HAP-1 (cell line): ENCODE measurements at regions of chr6 and their contacts with region 1.

Region 1: GRCh38 chr6:33248925-33249731 is 22.5 kb downstream of the VPS52 start:
- DNase-seq: peak; percentile 99 to 100
- H3K4me3 ChIP-seq: peak overlapping the region; percentile 37
- H3K4me1 ChIP-seq: peaks cover 16% of the 10 kb centered on the region
- H3K27me3 ChIP-seq: no peaks in the 10 kb centered on the region

Region 2: DNA sequence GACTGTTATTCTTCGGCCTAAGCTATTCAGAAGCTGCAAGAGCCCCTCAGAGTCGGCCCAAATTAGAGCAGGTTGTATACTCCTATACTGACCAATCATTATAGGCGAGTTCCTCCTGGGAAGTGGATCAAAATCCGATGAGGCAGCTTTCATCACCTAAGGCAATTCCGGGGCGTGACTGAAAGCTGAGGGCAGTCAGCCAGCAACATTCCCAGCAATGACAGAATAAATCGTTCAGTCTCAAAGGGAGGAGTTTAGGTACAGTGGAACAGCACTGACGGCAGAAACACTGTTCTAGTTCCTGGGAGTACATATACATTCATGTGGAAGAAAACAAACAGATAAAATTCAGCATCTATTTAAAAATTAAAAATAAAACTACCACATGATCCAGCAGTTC is 496.5 kb before region 1 on chr6:
- in situ Hi-C with region 1: no loop called
- DNase-seq: peak in 1 of 2 experiments; percentile 38
- H3K4me3 ChIP-seq: no peak overlapping the region
- H3K4me1 ChIP-seq: peaks cover 13% of the 10 kb centered on the region
- H3K27me3 ChIP-seq: peaks cover 18% of the 10 kb centered on the region

Region 3: DNA sequence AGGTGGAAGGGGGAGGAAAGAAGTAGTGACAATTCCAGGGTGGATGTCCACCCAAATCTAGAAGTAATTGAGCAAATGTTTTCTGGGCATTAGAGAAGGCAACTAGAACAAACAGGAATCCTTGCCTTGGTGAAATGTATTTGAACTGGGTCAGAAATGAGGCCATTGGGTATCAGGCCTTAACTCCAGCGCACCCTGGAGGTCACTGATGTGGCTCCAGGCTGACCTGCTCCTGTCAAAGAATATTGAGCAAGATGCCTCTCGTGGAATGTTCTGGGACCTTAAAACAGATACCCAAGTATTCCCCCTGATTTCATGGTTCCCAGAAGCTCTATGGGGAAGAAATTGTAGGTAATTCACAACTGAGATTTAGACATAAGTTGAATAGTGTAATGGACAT is 166.4 kb before region 1 on chr6:
- in situ Hi-C with region 1: no loop called
- DNase-seq: peak in 1 of 2 experiments; percentile 47
- H3K4me3 ChIP-seq: no peak overlapping the region
- H3K4me1 ChIP-seq: no peaks in the 10 kb centered on the region
- H3K27me3 ChIP-seq: peaks cover 16% of the 10 kb centered on the region

Region 4: GRCh38 chr6:33123732-33124524 is 125.2 kb before region 1 on chr6:
- in situ Hi-C with region 1: loop called (anchors 5 kb)
- DNase-seq: peak; percentile 75 to 79
- H3K4me3 ChIP-seq: no peak overlapping the region
- H3K4me1 ChIP-seq: peaks cover 5% of the 10 kb centered on the region
- H3K27me3 ChIP-seq: peaks cover 22% of the 10 kb centered on the region

Region 5: DNA sequence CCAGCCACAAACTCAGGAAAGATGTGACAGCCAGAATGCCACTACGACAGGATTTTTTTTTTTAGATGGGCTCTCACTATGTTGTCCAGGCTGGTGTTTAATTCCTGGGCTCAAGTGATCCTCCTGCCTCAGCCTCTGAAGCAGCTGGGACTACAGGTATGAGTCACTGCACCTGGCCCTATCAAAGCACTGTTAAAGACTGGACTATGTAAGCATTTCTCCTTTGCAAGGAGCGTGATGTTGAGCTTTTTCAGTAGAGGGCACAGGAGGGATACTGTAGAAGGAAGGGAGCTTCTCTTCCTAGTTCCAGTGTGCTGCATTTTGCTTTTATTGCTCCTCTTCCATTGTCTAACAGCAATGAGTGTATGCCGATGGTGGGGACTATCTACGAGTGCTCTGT is 241.1 kb after region 1 on chr6:
- in situ Hi-C with region 1: no loop called
- DNase-seq: no peak
- H3K4me3 ChIP-seq: no peak overlapping the region
- H3K4me1 ChIP-seq: no peaks in the 10 kb centered on the region
- H3K27me3 ChIP-seq: no peaks in the 10 kb centered on the region